Right cardiac atrium (tissue), 5 donors: ENCODE measurements at regions of chr3 and their contacts with region 1.

Region 1: GRCh38 chr3:192566706-192567290 is 160.5 kb downstream of the FGF12 start:
- DNase-seq: peak; percentile 66 to 83 (median 67)
- ATAC-seq: peak; percentile 76
- H3K4me3 ChIP-seq: peak overlapping the region; percentile 45
- H3K27ac ChIP-seq: no peak overlapping the region
- H3K4me1 ChIP-seq: peaks cover 3% of the 10 kb centered on the region
- H3K27me3 ChIP-seq: no peaks in the 10 kb centered on the region

Region 2: DNA sequence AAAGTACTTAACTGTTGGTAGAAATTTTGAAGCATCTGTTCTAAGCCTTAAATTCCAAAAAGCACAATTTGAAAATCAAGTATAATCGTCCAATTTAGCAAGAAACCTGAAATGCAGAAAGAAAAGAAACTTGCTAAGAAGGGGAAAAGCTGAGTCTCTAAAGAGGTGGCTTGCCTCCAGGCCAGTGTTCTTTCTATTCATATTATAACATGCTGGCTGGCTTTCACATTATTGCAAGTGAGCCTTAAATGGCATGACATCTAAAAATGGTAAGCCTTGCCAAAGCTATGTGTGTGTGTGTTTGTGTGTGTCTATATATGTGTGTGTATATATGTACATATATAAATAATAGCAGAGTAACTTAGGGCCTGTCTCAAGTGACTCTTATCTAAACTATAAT is 71.0 kb after region 1 on chr3:
- intact Hi-C with region 1: loop called in 1 of 4 experiments (anchors 10 kb)
- DNase-seq: no peak
- ATAC-seq: peak in 1 of 2 donors; percentile 14
- H3K4me3 ChIP-seq: no peak overlapping the region
- H3K27ac ChIP-seq: peak overlapping the region; percentile 58
- H3K4me1 ChIP-seq: no peaks in the 10 kb centered on the region
- H3K27me3 ChIP-seq: no peaks in the 10 kb centered on the region

Region 3: DNA sequence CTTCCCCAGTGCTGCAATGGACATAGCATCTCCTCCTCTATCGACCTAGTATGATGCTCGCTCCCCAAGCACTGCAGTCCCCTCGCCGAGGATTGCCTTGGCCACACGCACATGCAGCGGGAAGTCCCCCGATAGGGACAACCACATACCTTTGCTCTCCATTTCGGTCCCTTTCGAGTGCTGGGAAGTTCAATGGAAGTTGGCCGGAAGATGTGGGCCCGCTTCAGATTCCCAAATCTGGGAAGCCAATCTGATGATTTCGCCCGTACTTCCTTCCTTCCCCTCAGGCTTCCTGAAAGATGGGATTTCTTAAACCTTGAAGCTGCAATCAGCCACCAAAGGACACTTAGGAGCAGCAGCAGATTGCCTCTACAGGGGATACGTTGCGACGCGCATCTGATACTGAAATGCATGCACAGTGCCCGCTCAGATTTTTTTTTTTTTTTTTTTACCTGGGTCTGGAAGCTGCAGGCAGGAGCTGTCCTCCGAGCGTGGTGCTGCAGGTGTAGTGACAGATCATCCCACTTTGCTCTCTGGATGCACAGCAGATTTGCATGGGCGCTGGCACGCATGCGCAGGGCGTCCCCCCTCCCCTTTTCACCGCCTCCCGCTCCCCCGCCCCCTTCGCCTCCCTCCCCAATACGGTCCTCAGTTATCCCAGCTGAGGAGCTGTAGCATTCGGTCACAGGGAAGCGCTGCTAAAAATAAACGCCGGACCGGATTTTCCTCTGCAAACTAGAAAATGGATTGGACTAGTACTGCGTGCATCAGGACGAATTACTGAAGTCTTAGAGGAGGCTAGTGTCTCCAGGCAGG is 160.4 kb after region 1 on chr3 and contains the start of gene FGF12:
- intact Hi-C with region 1: loop called in 1 of 4 experiments (anchors 5 kb)
- DNase-seq: peak; percentile 84 to 94 (median 93)
- ATAC-seq: peak; percentile 94 to 95
- H3K4me3 ChIP-seq: peak within 1 kb of the TSS; percentile 70
- H3K27ac ChIP-seq: peak within 1 kb of the TSS; percentile 43
- H3K4me1 ChIP-seq: peaks cover 2% of the 10 kb centered on the region
- H3K27me3 ChIP-seq: no peaks in the 10 kb centered on the region
- total RNA-seq, gene FGF12: 315 to 354 (median 333) TPM

Region 4: DNA sequence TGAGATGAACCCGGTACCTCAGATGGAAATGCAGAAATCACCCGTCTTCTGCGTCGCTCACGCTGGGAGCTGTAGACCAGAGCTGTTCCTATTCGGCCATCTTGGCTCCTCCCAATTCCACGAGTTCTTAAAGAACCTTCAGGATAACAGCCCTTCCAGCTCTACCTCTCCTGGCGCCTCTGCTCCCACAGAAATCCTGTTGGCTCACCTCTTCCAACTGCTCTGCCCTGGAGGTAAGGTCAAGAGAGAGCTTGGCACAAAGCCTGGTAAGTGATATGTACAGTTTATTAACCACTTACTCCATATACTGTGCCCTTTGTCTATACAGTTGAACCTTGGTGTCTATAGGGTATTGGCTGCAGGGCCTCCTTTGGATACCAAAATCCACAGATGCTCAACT is 178.3 kb after region 1 on chr3:
- intact Hi-C with region 1: no loop called
- DNase-seq: peak in 1 of 3 donors; percentile 7
- ATAC-seq: no peak
- H3K4me3 ChIP-seq: no peak overlapping the region
- H3K27ac ChIP-seq: no peak overlapping the region
- H3K4me1 ChIP-seq: no peaks in the 10 kb centered on the region
- H3K27me3 ChIP-seq: no peaks in the 10 kb centered on the region

Region 5: GRCh38 chr3:192772240-192772894 is 205.6 kb after region 1 on chr3:
- intact Hi-C with region 1: loop called in 1 of 4 experiments (anchors 10 kb)
- DNase-seq: peak; percentile 28 to 65 (median 63)
- ATAC-seq: peak; percentile 69 to 76
- H3K4me3 ChIP-seq: no peak overlapping the region
- H3K27ac ChIP-seq: no peak overlapping the region
- H3K4me1 ChIP-seq: no peaks in the 10 kb centered on the region
- H3K27me3 ChIP-seq: no peaks in the 10 kb centered on the region

Region 6: DNA sequence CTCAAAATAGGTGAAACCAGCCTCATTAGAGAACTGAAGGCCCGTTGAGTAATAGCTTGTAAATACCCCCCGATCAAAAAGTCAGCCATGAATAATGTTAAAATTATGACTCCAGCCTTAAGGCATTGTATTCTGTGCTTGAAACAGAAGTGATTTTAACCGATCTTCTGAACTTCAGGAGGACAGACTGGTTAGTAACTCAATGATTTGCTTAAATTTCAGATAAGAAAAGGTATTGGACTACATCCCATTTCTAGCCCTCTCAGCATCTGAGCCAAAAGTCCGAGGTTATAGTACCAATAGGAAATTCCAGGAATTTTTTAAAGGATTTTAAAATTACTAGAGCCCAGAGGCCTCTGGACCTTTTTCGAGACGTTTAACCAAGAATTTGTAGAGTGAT is 228.2 kb after region 1 on chr3:
- intact Hi-C with region 1: loop called (anchors 5 to 10 kb)
- DNase-seq: no peak
- ATAC-seq: no peak
- H3K4me3 ChIP-seq: no peak overlapping the region
- H3K27ac ChIP-seq: no peak overlapping the region
- H3K4me1 ChIP-seq: no peaks in the 10 kb centered on the region
- H3K27me3 ChIP-seq: no peaks in the 10 kb centered on the region

Region 7: DNA sequence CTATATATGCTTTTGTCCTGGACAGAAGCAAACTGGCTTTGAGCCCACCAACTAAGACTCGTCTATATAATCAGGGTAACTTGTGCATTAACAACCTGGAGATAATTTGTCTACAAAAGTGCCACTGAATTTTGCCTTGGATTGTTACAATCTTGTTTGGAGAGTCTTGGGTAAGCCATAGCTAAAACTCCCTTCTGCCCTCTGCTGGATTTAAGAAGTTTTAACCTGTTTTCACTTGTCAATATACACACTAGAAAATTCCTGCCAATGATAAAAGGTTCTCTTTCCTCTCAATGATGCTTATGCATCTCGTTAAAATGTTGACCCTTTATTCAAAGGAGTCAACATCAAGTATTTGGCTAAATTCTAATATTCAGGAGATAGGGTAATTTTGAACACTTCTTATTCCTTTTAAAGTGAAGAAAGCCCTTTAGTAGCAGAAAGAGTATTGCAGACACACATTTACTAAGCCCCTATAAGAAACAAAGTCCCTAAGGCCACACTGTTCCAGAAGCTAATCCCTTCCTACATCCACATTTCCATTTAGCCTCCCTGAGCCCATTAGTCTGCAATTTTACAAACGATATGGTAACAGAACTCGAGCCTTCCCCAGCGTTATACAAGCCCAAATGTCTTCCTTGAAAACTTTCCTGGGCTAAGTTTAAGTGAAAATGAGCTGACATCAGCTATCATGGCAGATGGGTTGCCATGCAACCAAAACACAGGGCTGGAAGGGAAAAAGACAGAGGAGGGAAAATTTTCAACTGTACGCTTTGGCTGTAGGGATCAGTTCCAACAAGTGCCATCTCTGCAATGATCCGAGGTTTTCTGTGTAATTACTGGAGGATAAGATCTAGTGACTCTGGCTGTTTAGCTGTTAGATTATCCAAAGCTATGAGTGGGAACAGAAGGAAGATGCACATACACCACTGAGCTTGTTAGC is 236.4 kb after region 1 on chr3:
- intact Hi-C with region 1: loop called (anchors 5 to 10 kb)
- DNase-seq: no peak
- ATAC-seq: peak; percentile 52 to 59
- H3K4me3 ChIP-seq: no peak overlapping the region
- H3K27ac ChIP-seq: no peak overlapping the region
- H3K4me1 ChIP-seq: peaks cover 4% of the 10 kb centered on the region
- H3K27me3 ChIP-seq: no peaks in the 10 kb centered on the region

Region 8: GRCh38 chr3:192957441-192958021 is 390.7 kb after region 1 on chr3:
- intact Hi-C with region 1: no loop called
- DNase-seq: peak; percentile 64 to 76 (median 68)
- ATAC-seq: peak; percentile 98 to 99
- H3K4me3 ChIP-seq: no peak overlapping the region
- H3K27ac ChIP-seq: peak overlapping the region; percentile 90
- H3K4me1 ChIP-seq: no peaks in the 10 kb centered on the region
- H3K27me3 ChIP-seq: no peaks in the 10 kb centered on the region

Region 9: DNA sequence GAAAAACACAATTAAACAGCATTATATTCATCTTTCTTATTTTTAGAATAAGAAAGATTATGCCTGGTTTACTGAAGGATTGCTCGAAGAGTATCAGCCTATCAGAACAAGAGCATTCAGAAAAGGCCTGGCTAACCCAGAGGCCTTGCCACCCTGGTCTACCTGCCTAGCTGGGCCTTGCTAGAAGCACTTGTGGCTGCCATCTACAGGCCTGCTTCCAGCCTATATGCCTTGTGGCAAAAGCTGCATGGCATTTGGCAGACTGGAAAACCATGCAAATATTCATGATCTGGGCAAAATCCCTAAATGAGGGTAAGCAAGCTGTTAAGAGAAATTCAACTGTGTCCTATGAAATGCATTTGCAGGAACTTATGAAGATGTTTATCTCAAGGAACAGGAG is 997.2 kb after region 1 on chr3:
- intact Hi-C with region 1: loop called in 1 of 4 experiments (anchors 10 kb)
- DNase-seq: no peak
- ATAC-seq: no peak
- H3K4me3 ChIP-seq: no peak overlapping the region
- H3K27ac ChIP-seq: no peak overlapping the region
- H3K4me1 ChIP-seq: no peaks in the 10 kb centered on the region
- H3K27me3 ChIP-seq: no peaks in the 10 kb centered on the region